PC-3 (cell line): ENCODE measurements at regions of chr4 and their contacts with region 1.

Region 1: DNA sequence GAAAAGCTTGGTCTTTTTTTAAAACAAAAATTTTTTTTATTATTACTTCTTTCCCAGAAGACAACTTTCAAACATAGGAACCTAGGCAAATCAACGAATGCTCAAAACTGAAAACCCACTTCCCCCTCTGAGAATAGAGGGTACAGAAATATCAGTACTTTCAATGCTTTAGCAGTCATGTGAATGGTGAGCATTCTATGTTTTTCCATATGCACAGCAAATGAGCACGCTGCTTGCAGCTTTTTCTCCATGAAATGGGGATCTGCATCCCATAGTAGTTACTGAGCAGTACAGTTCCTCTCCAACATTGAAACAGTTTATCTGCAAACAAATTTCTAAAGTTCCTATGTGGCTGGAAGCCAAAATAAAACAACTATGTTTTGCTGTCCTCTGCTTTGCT is 108.4 kb upstream of the BMP2K start:
- DNase-seq: no peak
- ATAC-seq: no peak
- H3K4me3 ChIP-seq: no peak overlapping the region
- H3K27ac ChIP-seq: no peak overlapping the region
- H3K4me1 ChIP-seq: no peaks in the 10 kb centered on the region
- H3K27me3 ChIP-seq: no peaks in the 10 kb centered on the region
- CTCF ChIP-seq: no peak

Region 2: DNA sequence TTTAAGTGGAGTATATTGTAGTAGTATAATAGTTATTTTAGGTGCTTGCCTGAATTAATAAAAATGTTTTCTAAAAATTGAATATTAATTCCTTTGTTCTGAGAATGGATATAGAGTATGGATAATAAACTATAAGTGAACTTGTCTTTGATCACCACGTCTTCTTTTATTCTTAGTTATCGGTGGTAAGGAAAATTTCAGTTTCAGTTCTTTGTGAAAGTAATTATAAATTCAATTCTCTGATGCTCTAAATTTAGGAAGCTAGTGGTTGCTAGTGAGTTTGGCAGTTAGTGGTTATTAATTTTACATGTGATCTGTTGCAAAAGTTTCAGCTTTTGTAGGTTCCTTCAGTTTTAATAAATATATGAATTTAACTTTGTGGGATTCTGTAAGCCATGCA is 774.3 kb before region 1 on chr4:
- CTCF ChIA-PET with region 1: no interaction called
- POLR2A ChIA-PET with region 1: no interaction called
- intact Hi-C with region 1: no loop called
- DNase-seq: no peak
- ATAC-seq: no peak
- H3K4me3 ChIP-seq: no peak overlapping the region
- H3K27ac ChIP-seq: no peak overlapping the region
- H3K4me1 ChIP-seq: no peaks in the 10 kb centered on the region
- H3K27me3 ChIP-seq: no peaks in the 10 kb centered on the region
- CTCF ChIP-seq: no peak

Region 3: GRCh38 chr4:78829296-78829695 is 161.5 kb after region 1 on chr4:
- CTCF ChIA-PET with region 1: no interaction called
- POLR2A ChIA-PET with region 1: interaction called, 13 read pairs
- intact Hi-C with region 1: no loop called
- DNase-seq: no peak
- ATAC-seq: no peak
- H3K4me3 ChIP-seq: no peak overlapping the region
- H3K27ac ChIP-seq: no peak overlapping the region
- H3K4me1 ChIP-seq: no peaks in the 10 kb centered on the region
- H3K27me3 ChIP-seq: no peaks in the 10 kb centered on the region
- CTCF ChIP-seq: no peak